ENCODE measurements at regions of chr2 and their contacts with region 1.

Region 1: GRCh38 chr2:126644630-126645191 is 11.2 kb upstream of the GYPC start:
- DNase-seq: peak; percentile 79
- ATAC-seq: peak; percentile 90
- H3K4me3 ChIP-seq: no peak overlapping the region
- H3K4me3 Mint-ChIP-seq: peak overlapping the region; percentile 17
- H3K27ac ChIP-seq: peak overlapping the region; percentile 69 to 87
- H3K27ac Mint-ChIP-seq: peak overlapping the region; percentile 91
- H3K4me1 ChIP-seq: peaks cover 19 to 22% of the 10 kb centered on the region in 2 donors
- H3K4me1 Mint-ChIP-seq: peaks cover 20% of the 10 kb centered on the region
- H3K27me3 ChIP-seq: no peaks in the 10 kb centered on the region
- H3K27me3 Mint-ChIP-seq: no peaks in the 10 kb centered on the region
- CTCF ChIP-seq: no peak

Region 2: GRCh38 chr2:126657636-126658318 is 13.1 kb after region 1 on chr2:
- CTCF ChIA-PET with region 1: no interaction called
- POLR2A ChIA-PET with region 1: interaction called, 4 read pairs
- intact Hi-C with region 1: loop called (anchors 1 kb)
- DNase-seq: peak; percentile 64
- ATAC-seq: peak; percentile 60
- H3K4me3 ChIP-seq: peak overlapping the region; percentile 65 to 88 (median 73)
- H3K4me3 Mint-ChIP-seq: peak overlapping the region; percentile 99
- H3K27ac ChIP-seq: peak overlapping the region; percentile 80 to 81
- H3K27ac Mint-ChIP-seq: peak overlapping the region; percentile 94
- H3K4me1 ChIP-seq: peaks cover 47 to 56% of the 10 kb centered on the region in 2 donors
- H3K4me1 Mint-ChIP-seq: peaks cover 62% of the 10 kb centered on the region
- H3K27me3 ChIP-seq: no peaks in the 10 kb centered on the region
- H3K27me3 Mint-ChIP-seq: no peaks in the 10 kb centered on the region
- CTCF ChIP-seq: no peak